K562 (cell line): ENCODE measurements at regions of chr19 and their contacts with region 1.

Region 1: DNA sequence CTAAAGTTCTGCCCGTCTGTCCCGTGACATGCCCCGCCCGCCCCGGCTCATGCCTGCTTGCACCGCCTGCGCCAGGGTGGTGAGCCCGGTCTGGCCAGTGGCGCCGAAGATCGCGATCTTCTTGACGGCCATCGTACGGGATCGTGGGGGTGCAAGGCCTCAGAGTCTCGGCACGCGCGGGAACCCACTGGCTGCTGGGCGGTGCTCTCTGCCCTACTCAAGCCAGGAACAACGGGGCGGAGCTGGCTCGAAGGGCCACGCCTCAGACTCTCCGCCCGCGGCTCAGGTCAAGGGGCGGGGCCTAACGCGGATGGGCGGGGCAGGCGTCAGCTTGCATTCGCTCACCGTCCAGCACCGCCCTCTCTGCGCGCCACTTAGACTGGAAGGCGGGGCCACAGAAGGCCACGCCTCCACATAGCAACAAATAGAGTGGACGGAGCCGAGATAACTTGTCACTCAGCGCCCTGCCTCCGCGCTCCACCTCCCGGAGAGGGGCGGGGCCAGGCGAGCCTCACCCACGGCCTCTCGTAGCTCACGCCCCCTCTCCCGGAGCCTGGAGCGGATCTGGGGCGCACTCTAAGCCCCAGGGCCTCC is at the start of gene BLVRB:
- DNase-seq: peak; percentile 96 to 100 (median 98)
- ATAC-seq: peak; percentile 92
- H3K4me3 ChIP-seq: peak within 1 kb of the TSS; percentile 91
- H3K27ac ChIP-seq: peak within 1 kb of the TSS; percentile 96
- H3K4me1 ChIP-seq: peaks cover 23 to 57% of the 10 kb centered on the region in 2 experiments; a peak in 4 of 5 replicates
- H3K27me3 ChIP-seq: no peaks in the 10 kb centered on the region
- CTCF ChIP-seq: no peak
- EP300 ChIP-seq: no peak
- POLR2A ChIP-seq: peak; percentile 93
- RAD21 ChIP-seq: no peak
- polyA plus RNA-seq, gene BLVRB: 81.1 to 184 TPM

Region 2: DNA sequence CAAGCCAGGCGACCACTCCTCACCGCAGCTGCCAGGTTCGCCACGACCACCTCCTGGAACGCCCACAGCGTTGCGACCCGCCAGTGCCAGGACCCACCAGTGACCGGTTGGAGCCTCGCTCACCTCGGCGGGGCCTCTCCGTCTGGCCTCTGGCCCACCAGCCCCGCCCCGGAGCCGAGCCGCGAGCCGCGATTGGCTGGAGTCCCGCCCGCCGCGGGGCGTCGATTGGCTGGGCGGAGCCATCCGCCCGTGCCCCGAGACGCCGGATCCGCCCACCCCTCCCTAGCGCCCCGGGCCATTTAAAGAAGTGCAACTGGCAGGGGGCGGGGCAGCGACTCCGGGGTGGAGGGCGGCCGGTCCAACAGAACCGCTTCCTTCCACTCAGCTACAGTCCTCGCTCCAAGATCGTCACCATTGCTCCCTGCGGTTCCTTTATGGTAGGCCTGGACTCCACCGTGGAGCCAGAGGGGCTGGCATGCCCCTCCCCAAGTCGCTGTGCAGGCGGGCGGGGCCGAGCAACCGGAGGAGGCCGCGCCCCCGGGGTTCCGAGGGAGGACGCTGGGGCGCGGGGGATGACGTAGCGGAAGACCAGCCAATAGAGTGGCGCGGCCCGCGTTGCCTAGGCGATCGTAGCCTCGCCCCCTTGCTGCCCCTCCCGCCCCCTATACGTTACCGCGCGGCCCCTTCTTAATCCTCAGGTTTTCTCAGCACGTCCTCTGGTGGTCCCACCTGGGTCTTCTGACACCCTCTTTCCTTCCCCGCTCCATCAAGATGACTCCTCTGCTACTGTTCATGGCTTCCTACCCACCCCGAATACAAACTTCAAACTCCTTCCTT is 21.2 kb before region 1 on chr19 and contains the start of gene SERTAD3:
- CTCF ChIA-PET with region 1: no interaction called
- POLR2A ChIA-PET with region 1: interaction called, 27 read pairs
- in situ Hi-C with region 1: no loop called
- intact Hi-C with region 1: no loop called
- DNase-seq: peak; percentile 95 to 97 (median 96)
- ATAC-seq: peak; percentile 81
- H3K4me3 ChIP-seq: peak within 1 kb of the TSS; percentile 90
- H3K27ac ChIP-seq: peak within 1 kb of the TSS; percentile 95
- H3K4me1 ChIP-seq: peaks cover 24 to 29% of the 10 kb centered on the region in 2 experiments
- H3K27me3 ChIP-seq: no peaks in the 10 kb centered on the region
- CTCF ChIP-seq: peak; percentile 29 to 63 (median 60); a peak in 5 of 6 replicates
- EP300 ChIP-seq: no peak; the same call in 1 of the 2 replicates
- POLR2A ChIP-seq: peak; percentile 85
- RAD21 ChIP-seq: peak; percentile 36 to 55; a peak in 3 of 4 replicates
- polyA plus RNA-seq, gene SERTAD3: 5.4 to 5.9 TPM

Region 3: DNA sequence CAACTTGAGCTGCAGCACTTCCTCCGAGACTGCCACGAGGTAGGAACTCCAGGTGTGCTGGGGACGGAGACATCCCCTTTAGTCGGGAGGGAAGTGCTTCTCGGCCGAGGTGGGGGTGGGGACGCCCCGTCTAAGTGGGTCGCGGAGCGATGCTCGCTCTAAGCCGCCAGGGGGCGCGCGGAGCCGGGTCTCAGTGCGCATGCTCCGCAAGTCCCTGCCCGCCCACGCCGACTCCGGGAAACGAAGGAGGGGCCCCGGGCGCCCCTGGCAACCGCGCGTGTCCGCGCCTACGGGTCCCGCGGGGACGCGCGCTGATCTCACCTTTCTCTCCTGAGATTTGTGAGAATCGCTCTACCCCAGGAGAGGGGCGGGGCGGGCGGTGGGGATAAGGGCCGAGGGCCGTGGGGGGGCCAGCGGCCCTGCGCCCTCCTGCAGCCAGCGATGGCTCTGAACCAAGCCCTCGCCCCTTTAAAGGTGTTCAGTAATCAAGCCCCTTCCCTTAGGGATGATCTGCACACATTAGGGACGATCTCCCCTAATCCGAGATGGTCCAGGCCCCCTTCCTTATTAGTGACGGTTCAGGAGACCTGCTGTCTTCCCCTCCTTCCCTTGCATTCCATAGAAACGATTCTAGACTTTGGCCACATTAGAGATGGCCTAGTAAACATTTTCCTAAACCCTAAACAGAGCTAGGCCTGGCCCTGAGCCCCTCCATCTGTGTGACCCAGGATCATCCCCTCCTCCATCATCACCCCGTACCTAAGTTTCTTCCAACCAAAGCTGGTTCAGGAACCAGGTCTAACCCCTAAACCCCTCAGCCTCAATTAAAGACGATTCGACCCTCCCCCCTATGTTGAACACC is 63.7 kb after region 1 on chr19:
- CTCF ChIA-PET with region 1: no interaction called
- POLR2A ChIA-PET with region 1: interaction called, 9 read pairs
- in situ Hi-C with region 1: no loop called
- intact Hi-C with region 1: loop called (anchors 2 kb)
- DNase-seq: peak; percentile 93 to 99 (median 98)
- ATAC-seq: peak; percentile 58
- H3K4me3 ChIP-seq: peak overlapping the region; percentile 28
- H3K27ac ChIP-seq: no peak overlapping the region
- H3K4me1 ChIP-seq: peaks cover 43 to 76% of the 10 kb centered on the region in 2 experiments
- H3K27me3 ChIP-seq: no peaks in the 10 kb centered on the region
- CTCF ChIP-seq: peak; percentile 91 to 94 (median 91)
- EP300 ChIP-seq: no peak; the same call in 1 of the 2 replicates
- POLR2A ChIP-seq: no peak
- RAD21 ChIP-seq: peak; percentile 33 to 59; a peak in 3 of 4 replicates

Region 4: DNA sequence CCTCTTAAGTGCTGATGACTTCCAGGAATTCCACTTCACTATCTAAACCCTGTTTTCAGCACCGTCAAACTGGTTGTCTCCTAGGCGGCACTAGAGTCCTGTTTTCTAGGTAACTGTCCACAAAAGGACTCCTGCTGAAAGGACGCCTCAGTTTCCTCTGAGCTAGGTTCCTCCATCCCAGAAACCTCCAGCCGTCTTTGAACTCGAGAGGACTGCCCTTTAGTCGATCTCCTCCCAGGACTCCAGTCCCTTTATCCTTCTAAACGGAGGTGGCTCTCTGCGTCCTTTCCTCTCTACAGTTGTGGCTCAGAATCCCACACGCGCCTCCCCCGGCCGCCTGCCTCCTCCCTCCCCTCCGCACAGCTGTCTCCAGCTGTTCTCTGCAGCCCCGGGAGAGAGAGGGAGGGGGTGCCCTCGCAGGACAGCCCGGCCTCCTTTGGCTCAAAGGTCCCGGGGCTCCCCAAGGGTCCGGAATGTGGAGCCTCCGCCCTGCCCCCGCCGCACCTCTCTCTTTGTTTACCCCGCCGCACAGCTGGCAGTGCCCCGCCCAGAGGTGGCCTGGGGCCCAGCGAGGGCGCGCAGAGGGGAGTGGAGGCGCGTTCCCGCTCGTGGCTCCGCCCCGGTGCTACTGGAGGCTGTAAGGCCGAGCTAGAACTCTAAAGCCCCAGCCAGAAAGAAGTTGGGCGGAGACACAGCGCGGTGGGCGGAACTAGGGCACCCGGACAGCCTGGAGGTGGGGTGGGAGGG is 137.9 kb after region 1 on chr19:
- CTCF ChIA-PET with region 1: interaction called, 7 read pairs
- POLR2A ChIA-PET with region 1: interaction called, 15 read pairs
- in situ Hi-C with region 1: no loop called
- intact Hi-C with region 1: loop called (anchors 1 kb)
- DNase-seq: peak; percentile 76 to 99 (median 88)
- ATAC-seq: peak; percentile 83
- H3K4me3 ChIP-seq: peak overlapping the region; percentile 61
- H3K27ac ChIP-seq: peak overlapping the region; percentile 93
- H3K4me1 ChIP-seq: peaks cover 60 to 95% of the 10 kb centered on the region in 2 experiments
- H3K27me3 ChIP-seq: no peaks in the 10 kb centered on the region
- CTCF ChIP-seq: peak in 2 of 3 experiments; percentile 36 to 46; a peak in 3 of 6 replicates
- EP300 ChIP-seq: no peak
- POLR2A ChIP-seq: no peak
- RAD21 ChIP-seq: peak in 1 of 2 experiments; percentile 47; a peak in 2 of 4 replicates